Natural killer cell (primary cell): ENCODE measurements at regions of chr4 and their contacts with region 1.

Region 1: DNA sequence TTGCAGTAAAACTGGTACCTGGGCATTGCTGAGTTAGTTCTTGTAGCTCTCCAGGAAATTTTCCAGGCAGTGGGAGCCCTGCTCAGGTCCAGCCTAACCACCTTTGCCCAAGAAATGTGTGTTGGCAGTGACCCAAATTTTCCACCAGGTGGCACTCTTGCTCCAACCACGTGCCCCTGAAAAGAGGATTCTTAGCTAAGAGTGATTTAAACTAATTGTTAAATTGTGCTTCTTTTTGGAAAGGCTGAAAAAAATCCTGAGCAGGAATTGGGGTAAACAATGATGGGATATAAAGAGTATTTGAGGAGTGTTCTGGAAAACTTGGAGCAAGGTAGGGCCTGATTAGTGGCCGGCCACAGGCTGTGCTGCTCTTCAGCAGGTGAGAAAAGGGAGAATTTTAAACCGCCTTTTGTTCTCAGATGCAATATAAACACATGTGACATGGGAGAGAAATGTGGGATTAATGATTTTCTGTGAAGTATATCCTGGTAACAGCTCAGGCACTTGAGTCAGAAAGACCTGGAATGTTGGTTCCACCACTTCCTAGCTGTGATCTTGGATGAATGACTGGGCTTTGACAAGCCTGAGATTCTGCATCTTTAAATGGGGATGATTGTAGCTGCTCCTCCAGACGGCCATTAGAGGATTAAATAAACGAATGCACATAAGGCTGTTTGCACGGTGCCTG is 219.6 kb downstream of the PTTG2 start:
- DNase-seq: peak; percentile 57 to 86
- ATAC-seq: peak; percentile 72 to 74 (median 73)
- H3K4me3 ChIP-seq: no peak overlapping the region
- H3K4me3 Mint-ChIP-seq: no peak overlapping the region
- H3K27ac ChIP-seq: no peak overlapping the region
- H3K27ac Mint-ChIP-seq: no peak overlapping the region
- H3K4me1 ChIP-seq: peaks cover 31% of the 10 kb centered on the region
- H3K4me1 Mint-ChIP-seq: peaks cover 44 to 48% of the 10 kb centered on the region in 2 donors
- H3K27me3 ChIP-seq: no peaks in the 10 kb centered on the region
- H3K27me3 Mint-ChIP-seq: peaks cover 2 to 7% of the 10 kb centered on the region in 2 donors
- CTCF ChIP-seq: peak; percentile 96

Region 2: DNA sequence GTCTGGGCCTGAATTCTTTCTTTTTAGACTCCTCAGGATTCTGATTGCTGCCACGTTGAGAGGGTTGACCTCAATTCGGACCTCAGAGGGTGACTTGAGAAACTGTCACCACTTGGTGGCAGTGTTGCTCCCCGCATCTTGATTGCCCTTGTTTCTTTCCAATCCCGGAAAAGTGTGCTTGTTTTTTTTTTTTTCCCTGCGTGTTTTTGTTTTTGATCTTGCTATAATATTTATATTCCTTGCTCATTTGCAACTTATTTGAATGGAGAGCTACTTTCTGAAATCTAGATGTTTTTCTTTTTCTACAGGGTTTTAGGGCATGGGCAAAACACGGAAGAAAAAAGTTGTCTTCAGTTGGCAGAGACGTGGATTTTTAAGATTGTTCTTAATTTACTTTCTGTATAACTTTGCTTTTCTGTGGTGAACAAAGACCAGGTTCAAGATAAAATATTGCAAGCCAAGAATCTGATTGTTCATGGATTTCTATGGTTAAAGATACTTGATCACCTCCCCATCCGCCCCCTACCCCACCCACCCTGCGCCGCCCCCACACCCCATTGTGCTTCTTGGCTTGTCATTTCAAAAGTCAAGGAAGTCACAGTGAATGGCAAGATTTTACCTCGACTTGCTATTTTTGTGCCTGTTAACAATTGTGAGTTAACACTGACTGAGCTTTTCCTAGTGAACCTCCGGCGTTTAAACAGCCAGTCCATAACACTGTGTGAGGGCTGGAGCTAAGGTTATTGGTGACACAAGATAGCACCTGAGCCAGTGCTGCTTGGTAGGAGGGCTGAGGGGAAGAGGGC is 117.5 kb before region 1 on chr4:
- intact Hi-C with region 1: loop called (anchors 1 kb)
- DNase-seq: peak; percentile 59 to 84
- ATAC-seq: peak; percentile 73 to 86 (median 85)
- H3K4me3 ChIP-seq: peak overlapping the region; percentile 21
- H3K4me3 Mint-ChIP-seq: peak overlapping the region; percentile 92
- H3K27ac ChIP-seq: no peak overlapping the region
- H3K27ac Mint-ChIP-seq: peak overlapping the region; percentile 65 to 74
- H3K4me1 ChIP-seq: peaks cover 2% of the 10 kb centered on the region
- H3K4me1 Mint-ChIP-seq: peaks cover 6 to 8% of the 10 kb centered on the region in 2 donors
- H3K27me3 ChIP-seq: no peaks in the 10 kb centered on the region
- H3K27me3 Mint-ChIP-seq: no peaks in the 10 kb centered on the region
- CTCF ChIP-seq: peak; percentile 90

Region 3: GRCh38 chr4:38132107-38132673 is 47.6 kb before region 1 on chr4:
- intact Hi-C with region 1: loop called (anchors 1 kb)
- DNase-seq: peak; percentile 63 to 90
- ATAC-seq: peak; percentile 57 to 82 (median 78)
- H3K4me3 ChIP-seq: no peak overlapping the region
- H3K4me3 Mint-ChIP-seq: peak overlapping the region; percentile 76
- H3K27ac ChIP-seq: peak overlapping the region; percentile 85
- H3K27ac Mint-ChIP-seq: peak overlapping the region; percentile 96 to 99
- H3K4me1 ChIP-seq: peaks cover 55% of the 10 kb centered on the region
- H3K4me1 Mint-ChIP-seq: peaks cover 65 to 68% of the 10 kb centered on the region in 2 donors
- H3K27me3 ChIP-seq: no peaks in the 10 kb centered on the region
- H3K27me3 Mint-ChIP-seq: no peaks in the 10 kb centered on the region
- CTCF ChIP-seq: no peak

Region 4: DNA sequence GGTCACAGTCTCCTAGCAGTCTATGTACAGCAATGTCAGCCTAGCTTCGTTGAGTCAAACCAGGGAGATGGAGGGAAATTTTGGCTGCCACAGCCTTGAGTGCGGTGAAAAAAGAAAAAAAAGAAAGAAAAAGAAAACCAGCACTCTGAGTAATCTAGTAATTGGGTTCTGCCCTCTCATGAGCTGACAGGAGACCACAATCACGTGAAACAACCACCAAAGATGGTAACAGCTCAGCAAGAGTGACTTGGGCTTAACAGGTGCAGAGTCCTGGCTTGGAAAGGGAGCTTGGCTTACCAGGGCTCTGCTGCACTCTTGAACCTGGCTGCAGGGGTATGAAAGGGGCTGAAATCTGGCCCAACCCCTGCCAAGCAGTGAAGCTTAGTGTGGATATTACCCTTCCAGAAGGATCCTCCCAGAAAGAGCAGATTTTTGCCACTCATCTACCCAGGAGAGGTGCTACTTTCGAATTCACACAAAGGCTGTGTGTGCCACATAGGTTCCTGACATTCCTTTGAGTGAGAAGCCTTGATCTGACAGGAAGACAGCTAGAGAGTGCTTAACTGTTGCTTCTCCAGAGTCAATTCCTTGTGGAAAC is 130.7 kb after region 1 on chr4:
- intact Hi-C with region 1: loop called (anchors 5 kb)
- DNase-seq: peak; percentile 51 to 92
- ATAC-seq: peak; percentile 86 to 94 (median 88)
- H3K4me3 ChIP-seq: no peak overlapping the region
- H3K4me3 Mint-ChIP-seq: peak overlapping the region; percentile 67
- H3K27ac ChIP-seq: peak overlapping the region; percentile 21
- H3K27ac Mint-ChIP-seq: peak overlapping the region; percentile 81 to 85
- H3K4me1 ChIP-seq: peaks cover 17% of the 10 kb centered on the region
- H3K4me1 Mint-ChIP-seq: peaks cover 34 to 46% of the 10 kb centered on the region in 2 donors
- H3K27me3 ChIP-seq: no peaks in the 10 kb centered on the region
- H3K27me3 Mint-ChIP-seq: no peaks in the 10 kb centered on the region
- CTCF ChIP-seq: no peak

Region 5: GRCh38 chr4:38730830-38731646 is 551.2 kb after region 1 on chr4:
- intact Hi-C with region 1: loop called (anchors 1 kb)
- DNase-seq: peak; percentile 79 to 89
- ATAC-seq: peak; percentile 65 to 76 (median 75)
- H3K4me3 ChIP-seq: no peak overlapping the region
- H3K4me3 Mint-ChIP-seq: no peak overlapping the region
- H3K27ac ChIP-seq: no peak overlapping the region
- H3K27ac Mint-ChIP-seq: peak overlapping the region in 1 of 2 donors; percentile 61
- H3K4me1 ChIP-seq: peaks cover 22% of the 10 kb centered on the region
- H3K4me1 Mint-ChIP-seq: peaks cover 29 to 45% of the 10 kb centered on the region in 2 donors
- H3K27me3 ChIP-seq: peaks cover 2% of the 10 kb centered on the region
- H3K27me3 Mint-ChIP-seq: peaks cover 3 to 11% of the 10 kb centered on the region in 2 donors
- CTCF ChIP-seq: peak; percentile 98

Region 6: GRCh38 chr4:38782452-38783108 is 602.7 kb after region 1 on chr4 and contains the start of gene TLR10:
- intact Hi-C with region 1: loop called (anchors 1 kb)
- DNase-seq: peak in 1 of 2 donors; percentile 76
- ATAC-seq: peak; percentile 80 to 89 (median 85)
- H3K4me3 ChIP-seq: peak within 1 kb of the TSS; percentile 35
- H3K4me3 Mint-ChIP-seq: no peak within 1 kb of the TSS
- H3K27ac ChIP-seq: peak within 1 kb of the TSS; percentile 47
- H3K27ac Mint-ChIP-seq: no peak within 1 kb of the TSS
- H3K4me1 ChIP-seq: peaks cover 5% of the 10 kb centered on the region
- H3K4me1 Mint-ChIP-seq: peaks cover 5% of the 10 kb centered on the region in 2 donors
- H3K27me3 ChIP-seq: no peaks in the 10 kb centered on the region
- H3K27me3 Mint-ChIP-seq: peaks cover 3 to 8% of the 10 kb centered on the region in 2 donors
- CTCF ChIP-seq: peak; percentile 81
- total RNA-seq, gene TLR10: 0.31 to 0.63 (median 0.59) TPM

Region 7: GRCh38 chr4:38856524-38857337 is 676.9 kb after region 1 on chr4 and contains the start of gene TLR6:
- intact Hi-C with region 1: loop called (anchors 2 kb)
- DNase-seq: peak in 1 of 2 donors; percentile 89
- ATAC-seq: peak; percentile 77 to 81 (median 79)
- H3K4me3 ChIP-seq: peak within 1 kb of the TSS; percentile 48
- H3K4me3 Mint-ChIP-seq: peak within 1 kb of the TSS; percentile 92
- H3K27ac ChIP-seq: peak within 1 kb of the TSS; percentile 65
- H3K27ac Mint-ChIP-seq: peak within 1 kb of the TSS; percentile 78 to 84
- H3K4me1 ChIP-seq: peaks cover 13% of the 10 kb centered on the region
- H3K4me1 Mint-ChIP-seq: peaks cover 0 to 13% of the 10 kb centered on the region in 2 donors
- H3K27me3 ChIP-seq: no peaks in the 10 kb centered on the region
- H3K27me3 Mint-ChIP-seq: peaks cover 8 to 10% of the 10 kb centered on the region in 2 donors
- CTCF ChIP-seq: peak; percentile 83
- total RNA-seq, gene TLR6: 6.3 to 9.8 (median 6.8) TPM